Left ventricle myocardium inferior (tissue), 1 donor: ENCODE measurements at regions of chr6 and their contacts with region 1.

Region 1: GRCh38 chr6:30013291-30013922 is 47.7 kb upstream of the POLR1H start:
- DNase-seq: no peak
- H3K4me3 ChIP-seq: no peak overlapping the region
- H3K27ac ChIP-seq: no peak overlapping the region
- H3K4me1 ChIP-seq: no peaks in the 10 kb centered on the region
- H3K27me3 ChIP-seq: peaks cover 12% of the 10 kb centered on the region
- CTCF ChIP-seq: peak; percentile 93

Region 2: DNA sequence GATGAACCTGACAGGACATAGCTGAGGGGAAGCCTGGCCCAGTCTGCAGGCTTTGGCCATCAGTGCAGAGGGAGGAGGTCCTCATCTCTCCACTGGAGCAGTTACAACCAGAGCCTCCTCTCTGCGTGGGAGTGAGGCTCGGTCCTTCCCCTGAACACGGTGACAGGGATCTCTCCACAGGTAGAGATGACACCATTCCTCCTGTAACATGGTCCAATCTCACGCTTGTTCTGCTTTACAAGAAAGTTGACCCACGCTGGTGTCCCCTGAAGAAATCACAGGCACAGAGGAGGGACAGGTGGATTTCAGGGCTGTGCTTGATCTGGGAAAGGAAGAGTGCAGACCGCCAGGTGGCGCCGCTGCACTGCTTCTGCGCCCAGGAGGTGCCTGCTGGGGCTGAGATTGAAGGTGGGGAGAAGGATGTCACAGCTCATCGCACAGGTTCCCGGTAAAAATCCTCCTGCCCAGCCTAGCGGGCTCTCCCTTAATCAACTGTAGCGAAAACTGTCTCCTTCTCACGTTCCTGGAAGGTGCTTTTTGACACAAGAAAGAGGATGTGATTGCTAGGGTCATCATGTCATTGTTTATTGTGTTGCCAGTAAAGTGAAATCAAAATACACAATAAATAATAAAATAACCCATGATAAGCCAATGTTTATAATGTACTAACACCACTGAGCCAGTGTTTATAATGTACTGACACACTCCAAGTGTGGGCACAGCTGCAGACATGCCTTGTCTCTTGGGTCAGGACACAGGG is 165.4 kb before region 1 on chr6:
- intact Hi-C with region 1: loop called (anchors 2 kb)
- DNase-seq: peak; percentile 79
- H3K4me3 ChIP-seq: no peak overlapping the region
- H3K27ac ChIP-seq: no peak overlapping the region
- H3K4me1 ChIP-seq: peaks cover 5% of the 10 kb centered on the region
- H3K27me3 ChIP-seq: peaks cover 81% of the 10 kb centered on the region
- CTCF ChIP-seq: peak; percentile 93